Activated CD4-positive, alpha-beta memory T cell treated with anti-CD3 and anti-CD28 coated beads for 36 hours (primary cell): ENCODE measurements at regions of chr17 and their contacts with region 1.

Region 1: DNA sequence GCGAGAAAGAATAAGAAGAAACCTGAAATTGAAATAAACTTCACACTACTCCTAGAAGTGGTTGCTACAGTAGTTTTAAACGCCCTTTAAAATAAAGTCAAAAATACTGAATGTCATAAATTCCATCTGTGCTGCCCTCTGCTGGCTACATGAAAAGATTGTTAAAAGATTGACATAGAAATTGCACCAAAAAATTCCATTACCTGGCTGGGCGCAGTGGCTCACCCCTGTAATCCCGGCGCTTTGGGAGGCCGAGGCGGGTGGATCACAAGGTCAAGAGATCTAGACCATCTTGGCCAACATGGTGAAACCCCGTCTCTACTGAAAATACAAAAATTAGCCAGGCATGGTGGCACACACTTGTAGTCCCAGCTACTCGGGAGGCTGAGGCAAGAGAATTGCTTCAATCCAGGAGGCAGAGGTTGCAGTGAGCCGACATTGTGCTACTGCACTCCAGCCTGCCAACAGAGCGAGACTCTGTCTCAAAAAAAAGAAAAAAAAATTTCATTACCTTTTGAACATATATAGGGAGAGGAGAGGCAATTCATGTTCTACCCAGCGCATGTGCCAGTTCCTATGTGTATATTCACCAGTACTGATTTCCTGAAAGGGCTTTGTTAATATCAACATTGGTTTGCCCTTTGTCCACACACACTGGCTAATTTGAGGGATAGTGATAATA is 36.5 kb downstream of the CYTH1 start:
- DNase-seq: no peak
- H3K4me3 Mint-ChIP-seq: peak overlapping the region; percentile 45
- H3K27ac Mint-ChIP-seq: peak overlapping the region; percentile 96
- H3K4me1 Mint-ChIP-seq: peaks cover 91% of the 10 kb centered on the region
- H3K27me3 Mint-ChIP-seq: no peaks in the 10 kb centered on the region

Region 2: GRCh38 chr17:78708510-78708973 is 37.0 kb before region 1 on chr17:
- CTCF ChIA-PET with region 1: interaction called, 28 read pairs
- POLR2A ChIA-PET with region 1: interaction called, 6 read pairs
- intact Hi-C with region 1: loop called (anchors 1 kb)
- DNase-seq: peak; percentile 76
- H3K4me3 Mint-ChIP-seq: peak overlapping the region; percentile 46
- H3K27ac Mint-ChIP-seq: peak overlapping the region; percentile 80
- H3K4me1 Mint-ChIP-seq: peaks cover 63% of the 10 kb centered on the region
- H3K27me3 Mint-ChIP-seq: no peaks in the 10 kb centered on the region

Region 3: DNA sequence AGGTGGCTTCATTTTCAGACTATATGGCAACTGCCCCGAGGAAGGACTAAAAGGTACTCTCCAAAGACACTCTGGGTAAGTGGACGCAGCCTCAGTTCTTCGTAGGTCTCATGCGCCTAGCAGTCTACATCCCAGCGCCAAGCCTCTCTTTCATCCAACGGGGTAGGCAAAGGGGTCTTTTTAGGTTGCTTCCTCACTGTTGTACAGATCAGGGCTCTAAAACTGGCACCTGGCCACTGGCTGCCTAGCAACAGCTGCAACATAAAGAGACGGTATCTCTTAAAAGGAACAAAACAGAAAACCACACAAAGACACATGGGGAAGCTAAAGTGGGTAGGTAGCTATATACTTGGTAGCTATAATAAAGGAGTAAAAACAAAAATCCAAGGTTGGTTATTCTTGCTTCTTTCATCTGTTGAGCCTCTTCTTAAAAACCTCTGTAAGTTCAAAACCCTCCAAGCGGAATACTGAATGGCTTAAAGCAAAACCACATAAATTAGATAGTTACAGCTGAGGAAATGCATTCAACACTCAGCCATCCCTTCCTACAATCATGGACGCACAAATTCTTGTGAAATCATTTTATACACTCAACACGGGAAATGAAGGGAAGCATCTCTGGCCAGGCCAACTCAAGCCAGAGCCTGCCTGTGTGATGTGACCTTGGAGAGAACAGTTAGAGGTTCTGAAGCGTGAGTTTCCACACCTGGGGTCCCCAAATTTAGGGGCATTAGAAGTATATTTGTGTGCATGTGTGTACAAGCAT is 13.8 kb after region 1 on chr17:
- CTCF ChIA-PET with region 1: interaction called, 15 read pairs
- POLR2A ChIA-PET with region 1: interaction called, 66 read pairs
- intact Hi-C with region 1: loop called (anchors 1 kb)
- DNase-seq: peak; percentile 85
- H3K4me3 Mint-ChIP-seq: peak overlapping the region; percentile 68
- H3K27ac Mint-ChIP-seq: peak overlapping the region; percentile 98
- H3K4me1 Mint-ChIP-seq: peaks cover 82% of the 10 kb centered on the region
- H3K27me3 Mint-ChIP-seq: no peaks in the 10 kb centered on the region

Region 4: DNA sequence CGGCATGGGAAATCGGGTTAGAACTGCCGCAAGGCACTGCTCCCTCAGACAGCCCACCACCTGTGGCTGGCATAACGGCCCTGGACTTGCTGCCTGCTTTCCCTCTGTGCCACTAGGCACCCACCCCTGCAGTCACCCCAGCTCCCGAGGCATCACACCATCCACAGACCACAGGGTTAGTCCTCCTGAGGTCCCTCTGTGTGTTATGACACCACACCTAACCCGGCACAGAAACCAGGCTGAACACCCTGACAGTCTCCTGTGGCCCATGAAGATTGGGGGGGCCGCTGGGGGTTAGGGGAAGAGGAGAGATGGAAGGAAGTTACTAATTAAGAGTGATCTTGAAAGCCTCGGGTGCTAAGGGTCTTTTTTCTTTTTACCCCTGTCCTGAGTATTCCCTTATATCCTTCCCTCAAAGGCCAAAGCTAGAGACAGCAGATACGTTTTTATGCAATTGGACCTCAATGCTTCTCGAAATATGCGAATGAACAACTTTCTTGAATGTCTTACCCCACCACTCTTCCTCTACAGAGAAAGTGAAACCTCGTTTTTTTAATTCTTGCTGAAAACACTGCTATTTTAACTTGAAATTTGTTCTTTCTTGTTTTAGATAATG is 29.5 kb after region 1 on chr17:
- CTCF ChIA-PET with region 1: interaction called, 29 read pairs
- POLR2A ChIA-PET with region 1: interaction called, 481 read pairs
- intact Hi-C with region 1: loop called (anchors 1 kb)
- DNase-seq: peak; percentile 89
- H3K4me3 Mint-ChIP-seq: peak overlapping the region; percentile 82
- H3K27ac Mint-ChIP-seq: peak overlapping the region; percentile 99
- H3K4me1 Mint-ChIP-seq: peaks cover 59% of the 10 kb centered on the region
- H3K27me3 Mint-ChIP-seq: no peaks in the 10 kb centered on the region

Region 5: DNA sequence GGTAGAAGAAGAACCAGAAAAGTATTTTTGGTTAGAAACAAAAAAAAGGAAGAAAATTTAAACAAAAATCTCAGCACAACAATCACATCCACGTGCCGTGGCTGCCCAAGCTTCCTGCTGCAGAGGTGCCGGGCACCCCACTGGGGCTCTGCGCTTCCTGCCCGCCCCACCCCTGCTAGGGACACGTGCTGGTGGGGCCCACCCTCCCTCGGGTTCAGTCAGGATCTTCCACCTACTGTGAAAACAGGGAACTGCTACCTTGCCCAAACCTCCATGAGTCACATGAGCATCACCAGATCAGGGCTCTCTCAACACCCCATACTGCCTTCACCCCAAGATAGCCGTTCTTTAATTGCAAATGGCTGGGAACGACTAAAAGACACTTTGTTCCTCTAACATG is 60.9 kb after region 1 on chr17:
- CTCF ChIA-PET with region 1: interaction called, 5 read pairs
- POLR2A ChIA-PET with region 1: interaction called, 11 read pairs
- intact Hi-C with region 1: loop called (anchors 1 kb)
- DNase-seq: peak; percentile 60
- H3K4me3 Mint-ChIP-seq: no peak overlapping the region
- H3K27ac Mint-ChIP-seq: peak overlapping the region; percentile 95
- H3K4me1 Mint-ChIP-seq: peaks cover 51% of the 10 kb centered on the region
- H3K27me3 Mint-ChIP-seq: no peaks in the 10 kb centered on the region

Region 6: DNA sequence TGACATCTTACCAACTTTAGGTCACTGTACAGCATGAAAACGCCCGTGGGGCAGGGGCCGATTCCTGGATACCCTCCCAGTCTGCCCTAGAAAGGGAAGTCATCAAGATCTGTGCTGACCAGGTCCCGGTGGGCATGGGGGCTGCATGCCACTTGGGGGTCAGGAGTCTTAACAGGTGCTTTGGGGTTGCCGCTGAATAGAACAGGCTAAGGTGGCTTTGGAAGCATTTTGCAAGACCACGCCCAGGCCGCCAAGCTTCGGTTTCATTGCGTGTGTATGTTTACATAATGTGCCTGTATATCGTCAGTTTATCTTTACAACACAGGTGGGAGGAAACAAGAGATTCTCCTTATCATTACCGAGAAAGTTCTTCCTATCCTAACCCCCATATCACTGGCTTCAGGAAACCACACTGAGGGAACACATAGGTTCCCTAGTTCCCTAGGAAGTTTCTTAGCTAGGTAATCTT is 108.4 kb after region 1 on chr17:
- CTCF ChIA-PET with region 1: no interaction called
- POLR2A ChIA-PET with region 1: no interaction called
- intact Hi-C with region 1: no loop called
- DNase-seq: no peak
- H3K4me3 Mint-ChIP-seq: no peak overlapping the region
- H3K27ac Mint-ChIP-seq: no peak overlapping the region
- H3K4me1 Mint-ChIP-seq: no peaks in the 10 kb centered on the region
- H3K27me3 Mint-ChIP-seq: no peaks in the 10 kb centered on the region